Activated B cell treated with CpG ODN at 0.5 μM for 24 hours (primary cell): ENCODE measurements at regions of chr18 and their contacts with region 1.

Region 1: GRCh38 chr18:3297025-3297984 is 35.4 kb downstream of the MYL12B start:
- DNase-seq: peak; percentile 82
- ATAC-seq: peak; percentile 99
- H3K4me3 Mint-ChIP-seq: peak overlapping the region; percentile 95
- H3K27ac Mint-ChIP-seq: peak overlapping the region; percentile 83
- H3K4me1 Mint-ChIP-seq: peaks cover 11% of the 10 kb centered on the region
- H3K27me3 Mint-ChIP-seq: peaks cover 6% of the 10 kb centered on the region
- CTCF ChIP-seq: no peak

Region 2: GRCh38 chr18:3261371-3262246 is 35.7 kb before region 1 on chr18 and contains the start of gene MYL12B:
- CTCF ChIA-PET with region 1: interaction called, 5 read pairs
- POLR2A ChIA-PET with region 1: interaction called, 8 read pairs
- intact Hi-C with region 1: loop called (anchors 1 kb)
- DNase-seq: peak; percentile 81
- ATAC-seq: peak; percentile 83
- H3K4me3 Mint-ChIP-seq: peak within 1 kb of the TSS; percentile 94
- H3K27ac Mint-ChIP-seq: peak within 1 kb of the TSS; percentile 97
- H3K4me1 Mint-ChIP-seq: peaks cover 80% of the 10 kb centered on the region
- H3K27me3 Mint-ChIP-seq: no peaks in the 10 kb centered on the region
- CTCF ChIP-seq: no peak
- total RNA-seq, gene MYL12B: 185 and 198 TPM in 2 replicates

Region 3: DNA sequence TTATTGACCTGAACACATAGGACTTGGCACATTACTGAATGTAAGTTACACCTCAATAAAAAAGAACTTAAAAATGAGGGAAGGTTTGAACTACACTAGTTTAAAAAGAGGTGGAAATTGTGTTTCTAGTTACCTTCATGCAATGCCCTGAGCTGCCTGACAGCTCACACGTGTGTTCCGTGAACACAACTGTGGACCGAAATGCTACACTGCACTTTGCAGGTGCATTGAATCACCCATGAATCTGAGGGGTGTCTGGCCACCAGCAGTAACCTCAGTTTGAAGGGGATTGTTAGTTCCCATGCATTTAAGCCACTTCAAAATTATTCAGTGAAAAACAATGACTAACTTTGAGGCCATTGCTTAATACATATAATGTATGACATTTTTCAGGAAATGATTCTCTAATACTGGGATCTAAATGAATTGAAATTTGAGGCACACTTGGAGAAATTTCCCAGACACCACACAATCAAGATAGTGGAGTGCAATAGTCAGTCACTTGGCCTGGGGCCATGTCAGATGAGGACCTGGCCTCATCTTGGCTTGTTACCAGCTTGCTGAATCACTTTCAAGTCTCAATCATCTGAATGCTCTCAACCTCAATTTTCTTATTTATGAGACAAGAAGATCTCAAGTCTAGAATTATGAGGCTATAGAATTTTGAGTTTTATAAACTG is 24.0 kb after region 1 on chr18:
- CTCF ChIA-PET with region 1: interaction called, 6 read pairs
- POLR2A ChIA-PET with region 1: interaction called, 4 read pairs
- intact Hi-C with region 1: loop called (anchors 1 kb)
- DNase-seq: no peak
- ATAC-seq: no peak
- H3K4me3 Mint-ChIP-seq: no peak overlapping the region
- H3K27ac Mint-ChIP-seq: no peak overlapping the region
- H3K4me1 Mint-ChIP-seq: peaks cover 24% of the 10 kb centered on the region
- H3K27me3 Mint-ChIP-seq: no peaks in the 10 kb centered on the region
- CTCF ChIP-seq: no peak

Region 4: GRCh38 chr18:3380384-3380961 is 83.2 kb after region 1 on chr18:
- CTCF ChIA-PET with region 1: interaction called, 5 read pairs
- POLR2A ChIA-PET with region 1: interaction called, 3 read pairs
- intact Hi-C with region 1: loop called (anchors 5 kb)
- DNase-seq: no peak
- ATAC-seq: peak; percentile 66
- H3K4me3 Mint-ChIP-seq: no peak overlapping the region
- H3K27ac Mint-ChIP-seq: no peak overlapping the region
- H3K4me1 Mint-ChIP-seq: peaks cover 21% of the 10 kb centered on the region
- H3K27me3 Mint-ChIP-seq: no peaks in the 10 kb centered on the region
- CTCF ChIP-seq: no peak